ENCODE measurements at regions of chr10 and their contacts with region 1.

Region 1: GRCh38 chr10:21825345-21825744 is 178.2 kb downstream of the DNAJC1 start:
- DNase-seq: no peak
- H3K4me3 ChIP-seq: no peak overlapping the region
- H3K27ac ChIP-seq: no peak overlapping the region
- H3K4me1 ChIP-seq: no peaks in the 10 kb centered on the region
- H3K27me3 ChIP-seq: no peaks in the 10 kb centered on the region
- CTCF ChIP-seq: no peak

Region 2: GRCh38 chr10:21355561-21356011 is 469.8 kb before region 1 on chr10:
- CTCF ChIA-PET with region 1: no interaction called
- POLR2A ChIA-PET with region 1: no interaction called
- intact Hi-C with region 1: no loop called
- DNase-seq: peak; percentile 23 to 68
- H3K4me3 ChIP-seq: no peak overlapping the region
- H3K27ac ChIP-seq: peak overlapping the region; percentile 69
- H3K4me1 ChIP-seq: peaks cover 37% of the 10 kb centered on the region
- H3K27me3 ChIP-seq: no peaks in the 10 kb centered on the region
- CTCF ChIP-seq: no peak

Region 3: DNA sequence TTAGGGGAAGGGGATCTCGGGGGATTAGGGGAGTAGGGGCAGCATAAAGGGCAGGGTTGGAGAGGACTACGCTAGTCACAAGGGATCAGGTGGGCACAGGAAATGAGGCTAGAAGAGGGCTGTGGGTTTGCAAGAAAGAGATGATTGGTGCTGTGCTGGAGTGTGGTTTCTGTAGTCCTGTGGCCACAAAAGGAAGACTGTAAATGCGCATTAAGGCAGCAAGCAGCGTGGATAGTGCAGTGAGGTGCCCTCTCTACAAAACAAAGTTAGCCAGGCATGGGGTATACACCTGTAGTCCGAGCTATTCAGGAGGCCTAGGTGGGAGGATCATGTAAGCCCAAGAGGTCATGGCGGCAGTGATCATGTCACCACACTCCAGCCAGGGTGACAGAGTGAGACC is 79.2 kb before region 1 on chr10:
- CTCF ChIA-PET with region 1: no interaction called
- POLR2A ChIA-PET with region 1: no interaction called
- intact Hi-C with region 1: no loop called
- DNase-seq: no peak
- H3K4me3 ChIP-seq: no peak overlapping the region
- H3K27ac ChIP-seq: no peak overlapping the region
- H3K4me1 ChIP-seq: no peaks in the 10 kb centered on the region
- H3K27me3 ChIP-seq: no peaks in the 10 kb centered on the region
- CTCF ChIP-seq: no peak

Region 4: DNA sequence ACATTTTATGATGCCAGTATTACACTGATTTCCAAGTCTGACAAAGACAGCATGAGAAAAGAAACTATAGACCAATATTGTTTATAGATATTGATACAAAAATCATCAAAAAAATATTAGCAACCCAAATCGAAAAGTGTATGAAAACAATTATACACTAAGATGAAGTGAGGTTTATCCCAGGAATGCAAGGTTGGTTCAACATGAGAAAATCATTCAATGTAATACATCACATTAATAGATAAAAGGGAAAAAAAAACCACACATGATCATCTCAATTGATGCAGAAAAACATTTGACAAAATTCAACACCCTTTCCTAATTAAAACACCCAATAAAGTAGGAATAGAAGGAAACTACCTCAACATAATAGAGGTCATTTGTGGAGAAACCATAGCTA is 24.3 kb after region 1 on chr10:
- CTCF ChIA-PET with region 1: interaction called, 10 read pairs
- POLR2A ChIA-PET with region 1: no interaction called
- intact Hi-C with region 1: no loop called
- DNase-seq: no peak
- H3K4me3 ChIP-seq: no peak overlapping the region
- H3K27ac ChIP-seq: no peak overlapping the region
- H3K4me1 ChIP-seq: no peaks in the 10 kb centered on the region
- H3K27me3 ChIP-seq: no peaks in the 10 kb centered on the region
- CTCF ChIP-seq: no peak

Measured in PC-9 (cell line).